K562 (cell line): ENCODE measurements at regions of chr12 and their contacts with region 1.

Region 1: GRCh38 chr12:57005980-57006808 is at the start of gene ZBTB39:
- DNase-seq: peak; percentile 74 to 96 (median 96)
- ATAC-seq: peak; percentile 83
- H3K4me3 ChIP-seq: peak within 1 kb of the TSS; percentile 94
- H3K27ac ChIP-seq: peak within 1 kb of the TSS; percentile 62
- H3K4me1 ChIP-seq: peaks cover 19 to 41% of the 10 kb centered on the region in 2 experiments; a peak in 4 of 5 replicates
- H3K27me3 ChIP-seq: no peaks in the 10 kb centered on the region
- CTCF ChIP-seq: peak; percentile 62 to 95 (median 73)
- EP300 ChIP-seq: no peak
- POLR2A ChIP-seq: 0 out of 2 replicates have a peak, but pooled peaks have one; percentile 45
- RAD21 ChIP-seq: 0 out of 4 replicates have a peak, but pooled peaks of 1 of the 2 experiments have one; percentile 8
- polyA plus RNA-seq, gene ZBTB39: 3.3 to 3.4 TPM

Region 2: GRCh38 chr12:56636675-56637540 is 369.3 kb before region 1 on chr12:
- CTCF ChIA-PET with region 1: no interaction called
- POLR2A ChIA-PET with region 1: no interaction called
- in situ Hi-C with region 1: no loop called
- intact Hi-C with region 1: loop called (anchors 10 kb)
- DNase-seq: peak; percentile 90 to 100 (median 94)
- ATAC-seq: peak; percentile 84
- H3K4me3 ChIP-seq: peak overlapping the region; percentile 85
- H3K27ac ChIP-seq: peak overlapping the region; percentile 86
- H3K4me1 ChIP-seq: peaks cover 23 to 38% of the 10 kb centered on the region in 2 experiments
- H3K27me3 ChIP-seq: no peaks in the 10 kb centered on the region
- CTCF ChIP-seq: peak; percentile 79 to 91 (median 88)
- EP300 ChIP-seq: peak; percentile 62
- POLR2A ChIP-seq: peak; percentile 76
- RAD21 ChIP-seq: peak; percentile 66 to 87

Region 3: GRCh38 chr12:56763753-56764657 is 242.2 kb before region 1 on chr12:
- CTCF ChIA-PET with region 1: interaction called, 3 read pairs
- POLR2A ChIA-PET with region 1: interaction called, 3 read pairs
- in situ Hi-C with region 1: loop called (anchors 5 kb)
- intact Hi-C with region 1: no loop called
- DNase-seq: no peak
- ATAC-seq: no peak
- H3K4me3 ChIP-seq: no peak overlapping the region
- H3K27ac ChIP-seq: no peak overlapping the region
- H3K4me1 ChIP-seq: no peaks in the 10 kb centered on the region
- H3K27me3 ChIP-seq: no peaks in the 10 kb centered on the region
- CTCF ChIP-seq: no peak
- EP300 ChIP-seq: no peak
- POLR2A ChIP-seq: no peak
- RAD21 ChIP-seq: no peak

Region 4: GRCh38 chr12:56947633-56948456 is 58.3 kb before region 1 on chr12:
- CTCF ChIA-PET with region 1: interaction called, 5 read pairs
- POLR2A ChIA-PET with region 1: no interaction called
- in situ Hi-C with region 1: no loop called
- intact Hi-C with region 1: loop called (anchors 1 kb)
- DNase-seq: peak in 2 of 4 experiments; percentile 27 to 50
- ATAC-seq: peak; percentile 84
- H3K4me3 ChIP-seq: no peak overlapping the region
- H3K27ac ChIP-seq: no peak overlapping the region; the same call in 2 of the 3 replicates
- H3K4me1 ChIP-seq: no peaks in the 10 kb centered on the region; a peak in 4 of 5 replicates
- H3K27me3 ChIP-seq: no peaks in the 10 kb centered on the region
- CTCF ChIP-seq: peak; percentile 26 to 56 (median 54); a peak in 5 of 6 replicates
- EP300 ChIP-seq: no peak
- POLR2A ChIP-seq: no peak
- RAD21 ChIP-seq: peak; percentile 36 to 78; a peak in 3 of 4 replicates

Region 5: DNA sequence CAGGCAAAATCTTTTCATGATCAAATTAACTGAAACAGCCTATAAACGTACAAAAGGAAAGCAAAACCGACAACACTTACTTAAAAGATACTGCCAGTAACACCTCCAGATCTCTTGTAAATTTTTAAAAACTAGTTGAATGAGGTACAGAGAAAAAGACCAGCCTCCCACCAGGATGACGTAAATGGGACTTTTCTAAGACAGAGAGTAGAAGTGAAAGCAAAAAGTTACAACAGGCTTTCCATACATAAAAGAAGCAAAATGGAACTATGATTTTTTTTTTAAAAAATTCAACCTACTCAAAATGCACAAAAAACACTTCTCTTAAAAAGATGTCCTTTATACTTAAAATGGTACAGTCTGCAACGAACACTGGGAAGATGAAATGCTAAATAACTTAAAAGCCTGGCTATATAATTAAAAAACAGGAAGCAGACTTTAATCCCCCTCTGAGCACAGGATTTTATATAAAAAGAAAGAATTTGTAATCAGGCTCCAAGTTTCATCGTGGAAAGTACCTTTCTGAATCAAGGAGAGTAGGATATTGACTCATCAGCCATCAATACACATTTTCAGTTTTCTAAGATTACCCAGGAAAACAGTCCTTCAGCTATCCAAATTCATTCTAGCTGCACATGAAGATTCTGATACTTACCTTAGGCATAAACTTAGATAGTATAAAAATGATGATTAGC is 57.9 kb after region 1 on chr12:
- CTCF ChIA-PET with region 1: interaction called, 63 read pairs
- POLR2A ChIA-PET with region 1: no interaction called
- in situ Hi-C with region 1: no loop called
- intact Hi-C with region 1: loop called (anchors 1 kb)
- DNase-seq: no peak
- ATAC-seq: no peak
- H3K4me3 ChIP-seq: no peak overlapping the region
- H3K27ac ChIP-seq: no peak overlapping the region
- H3K4me1 ChIP-seq: no peaks in the 10 kb centered on the region; a peak in 1 of 5 replicates
- H3K27me3 ChIP-seq: no peaks in the 10 kb centered on the region
- CTCF ChIP-seq: no peak
- EP300 ChIP-seq: no peak
- POLR2A ChIP-seq: no peak
- RAD21 ChIP-seq: no peak

Region 6: DNA sequence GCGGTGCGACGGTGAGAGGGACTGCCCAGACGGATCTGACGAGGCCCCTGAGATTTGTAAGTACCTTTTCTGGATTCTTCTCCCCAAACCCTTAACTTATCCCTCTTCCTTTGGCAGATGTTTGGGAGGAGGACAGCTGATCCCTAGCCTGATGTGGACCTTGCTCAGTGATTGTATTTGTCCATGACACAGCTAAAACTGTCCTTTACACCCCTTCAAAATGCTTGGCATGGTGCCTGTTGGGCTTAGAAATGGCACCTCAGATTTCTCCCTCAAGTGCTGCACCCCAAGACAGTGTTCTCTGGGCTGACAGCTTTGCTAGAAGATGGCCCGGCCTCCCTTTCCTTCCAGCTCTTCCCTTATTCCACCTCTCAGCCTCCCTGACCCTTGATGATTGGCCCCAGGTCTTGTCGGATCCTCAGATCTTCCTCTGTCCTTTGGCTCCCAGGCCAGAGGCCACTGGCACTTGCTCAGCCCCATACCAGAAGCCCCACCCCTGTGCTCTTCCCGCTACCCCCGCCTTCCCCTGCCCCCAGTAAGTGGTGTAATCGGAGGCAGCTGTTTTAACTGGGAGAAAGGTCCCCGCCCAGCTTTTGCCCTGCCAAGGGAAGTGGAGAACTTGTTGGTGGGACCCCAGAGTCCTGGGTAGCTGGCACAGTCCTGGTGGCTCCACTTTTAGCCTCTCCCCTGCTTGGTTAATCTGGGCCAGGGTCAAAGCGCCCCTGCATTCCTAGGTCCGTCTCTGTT is 132.5 kb after region 1 on chr12:
- CTCF ChIA-PET with region 1: no interaction called
- POLR2A ChIA-PET with region 1: no interaction called
- in situ Hi-C with region 1: no loop called
- intact Hi-C with region 1: no loop called
- DNase-seq: peak; percentile 49 to 63 (median 61)
- ATAC-seq: peak; percentile 83
- H3K4me3 ChIP-seq: no peak overlapping the region
- H3K27ac ChIP-seq: no peak overlapping the region
- H3K4me1 ChIP-seq: peaks cover 18 to 23% of the 10 kb centered on the region in 2 experiments; a peak in 4 of 5 replicates
- H3K27me3 ChIP-seq: no peaks in the 10 kb centered on the region
- CTCF ChIP-seq: no peak
- EP300 ChIP-seq: no peak
- POLR2A ChIP-seq: no peak
- RAD21 ChIP-seq: no peak

Region 7: GRCh38 chr12:57182921-57183790 is 177.0 kb after region 1 on chr12:
- CTCF ChIA-PET with region 1: interaction called, 9 read pairs
- POLR2A ChIA-PET with region 1: interaction called, 6 read pairs
- in situ Hi-C with region 1: no loop called
- intact Hi-C with region 1: loop called (anchors 2 kb)
- DNase-seq: peak; percentile 78 to 92 (median 90)
- ATAC-seq: peak; percentile 95
- H3K4me3 ChIP-seq: no peak overlapping the region
- H3K27ac ChIP-seq: no peak overlapping the region
- H3K4me1 ChIP-seq: peaks cover 0 to 37% of the 10 kb centered on the region in 2 experiments; a peak in 3 of 5 replicates
- H3K27me3 ChIP-seq: peaks cover 56 to 87% of the 10 kb centered on the region in 2 experiments
- CTCF ChIP-seq: peak; percentile 93 to 96 (median 93)
- EP300 ChIP-seq: no peak
- POLR2A ChIP-seq: no peak
- RAD21 ChIP-seq: peak; percentile 86 to 92